Prostate gland (tissue), 2 donors: ENCODE measurements at regions of chr20 and their contacts with region 1.

Region 1: DNA sequence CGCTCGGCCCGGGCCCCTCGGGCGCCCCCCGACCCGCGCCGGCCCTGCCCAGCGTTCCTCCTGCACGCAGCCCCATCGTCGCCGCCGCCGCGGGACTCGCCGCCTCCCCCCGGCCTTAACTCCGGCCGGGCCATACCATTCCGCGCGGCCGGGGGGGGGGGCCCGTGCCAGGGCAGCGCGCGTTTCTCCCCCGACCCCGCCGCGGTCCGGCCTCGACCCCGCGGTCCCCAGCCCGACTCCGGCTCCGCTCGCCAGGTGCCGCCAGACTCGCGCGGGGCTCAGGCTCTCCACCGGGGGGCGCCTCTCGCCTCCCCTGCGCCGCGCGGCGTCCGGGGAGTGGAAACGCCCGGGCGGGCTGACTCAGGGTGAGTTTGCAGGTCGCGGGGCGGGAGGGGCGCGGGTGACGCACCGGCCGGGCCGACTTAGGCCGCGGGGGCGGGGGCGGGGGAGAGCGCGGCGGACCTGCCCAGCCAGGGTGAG is at the start of gene SRXN1:
- DNase-seq: peak; percentile 85
- H3K4me3 ChIP-seq: peak within 1 kb of the TSS; percentile 56 to 74
- H3K27ac ChIP-seq: peak within 1 kb of the TSS; percentile 76 to 80
- H3K4me1 ChIP-seq: peaks cover 5% of the 10 kb centered on the region
- H3K27me3 ChIP-seq: no peaks in the 10 kb centered on the region
- CTCF ChIP-seq: peak; percentile 26 to 82 (median 61)
- POLR2A ChIP-seq: peak; percentile 11
- total RNA-seq, gene SRXN1: 33.6 to 41.4 TPM

Region 2: DNA sequence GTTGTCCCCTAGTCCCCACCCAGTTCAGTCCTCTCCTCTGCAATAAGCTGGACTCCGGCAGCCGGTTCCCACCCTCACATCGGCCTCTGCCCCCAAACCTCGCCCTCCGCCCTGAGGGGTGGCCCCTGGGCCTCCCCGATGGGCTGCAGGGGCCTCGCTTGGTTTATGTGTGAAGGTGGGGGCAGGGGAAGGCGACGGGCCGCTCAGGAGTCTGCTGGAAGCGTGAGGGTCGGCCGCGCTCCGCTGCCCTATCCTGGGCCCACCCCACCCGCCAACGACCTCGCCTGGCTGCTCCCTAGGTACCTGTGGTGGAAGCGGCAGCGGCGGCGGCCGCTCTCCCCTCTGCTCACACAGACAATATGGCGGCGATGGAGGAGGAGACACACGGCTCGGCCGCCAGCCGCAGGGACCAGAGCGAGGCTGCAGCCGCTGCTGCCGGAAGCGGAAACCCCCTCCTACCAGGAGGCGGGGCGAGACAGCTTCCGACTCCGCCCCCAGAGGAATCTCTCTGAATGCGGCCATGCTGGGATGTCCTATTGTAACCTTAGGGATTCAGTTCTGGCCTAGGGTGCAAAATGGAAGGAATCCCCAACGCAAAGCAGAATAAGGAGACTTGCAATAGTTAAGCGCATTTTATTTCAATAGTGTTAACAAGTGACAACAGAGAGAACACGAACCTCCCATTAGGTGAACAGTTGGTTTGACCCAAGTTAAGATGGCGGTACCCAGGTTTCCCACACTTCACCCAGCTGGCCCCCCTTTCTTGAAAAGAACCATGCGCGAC is 109.6 kb before region 1 on chr20 and contains the start of gene CSNK2A1:
- intact Hi-C with region 1: loop called (anchors 10 kb)
- DNase-seq: peak; percentile 92
- H3K4me3 ChIP-seq: peak within 1 kb of the TSS; percentile 91 to 97
- H3K27ac ChIP-seq: peak within 1 kb of the TSS; percentile 92 to 93
- H3K4me1 ChIP-seq: peaks cover 6% of the 10 kb centered on the region
- H3K27me3 ChIP-seq: no peaks in the 10 kb centered on the region
- CTCF ChIP-seq: peak in 2 of 4 experiments; percentile 9 to 16
- POLR2A ChIP-seq: peak; percentile 94
- total RNA-seq, gene CSNK2A1: 66.9 to 152 TPM

Region 3: DNA sequence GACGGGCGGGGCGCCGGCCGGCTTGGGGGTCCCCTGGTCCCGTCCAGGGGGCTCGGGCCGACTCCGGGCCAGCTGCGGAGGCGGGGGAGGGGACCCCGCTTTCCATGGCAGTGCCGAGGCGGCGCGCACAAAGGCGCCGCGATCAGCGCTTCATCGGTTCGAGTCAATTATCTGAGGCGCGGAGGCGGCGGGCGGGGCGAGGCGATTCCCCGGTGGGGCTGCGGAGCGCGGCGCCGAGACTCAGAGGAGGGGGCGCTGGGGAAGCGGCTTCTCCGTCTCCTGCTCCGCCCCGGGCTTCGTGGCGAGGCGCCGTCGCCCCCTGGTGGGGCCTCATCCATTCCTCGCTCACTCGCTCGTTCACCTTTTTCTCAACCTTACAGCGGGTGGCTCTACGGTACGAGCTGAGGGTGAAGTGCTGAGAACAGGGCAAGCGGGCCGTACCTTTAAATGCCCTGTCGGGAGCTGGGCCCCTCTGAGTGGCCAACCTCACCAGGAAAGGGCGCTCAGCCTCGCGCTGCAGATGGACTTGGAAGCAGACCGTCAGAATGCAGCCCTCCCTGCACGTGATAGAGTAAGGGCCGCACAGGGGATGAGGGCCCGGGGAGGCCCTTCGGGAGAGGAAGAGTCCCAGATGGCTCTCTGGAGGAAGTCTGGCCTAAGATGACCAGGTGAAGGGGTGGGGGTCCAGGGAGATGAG is 75.2 kb after region 1 on chr20:
- intact Hi-C with region 1: loop called (anchors 5 kb)
- DNase-seq: peak; percentile 52
- H3K4me3 ChIP-seq: peak overlapping the region; percentile 30 to 40
- H3K27ac ChIP-seq: no peak overlapping the region
- H3K4me1 ChIP-seq: no peaks in the 10 kb centered on the region
- H3K27me3 ChIP-seq: no peaks in the 10 kb centered on the region
- CTCF ChIP-seq: peak in 3 of 4 experiments; percentile 55 to 68 (median 66)
- POLR2A ChIP-seq: no peak

Region 4: DNA sequence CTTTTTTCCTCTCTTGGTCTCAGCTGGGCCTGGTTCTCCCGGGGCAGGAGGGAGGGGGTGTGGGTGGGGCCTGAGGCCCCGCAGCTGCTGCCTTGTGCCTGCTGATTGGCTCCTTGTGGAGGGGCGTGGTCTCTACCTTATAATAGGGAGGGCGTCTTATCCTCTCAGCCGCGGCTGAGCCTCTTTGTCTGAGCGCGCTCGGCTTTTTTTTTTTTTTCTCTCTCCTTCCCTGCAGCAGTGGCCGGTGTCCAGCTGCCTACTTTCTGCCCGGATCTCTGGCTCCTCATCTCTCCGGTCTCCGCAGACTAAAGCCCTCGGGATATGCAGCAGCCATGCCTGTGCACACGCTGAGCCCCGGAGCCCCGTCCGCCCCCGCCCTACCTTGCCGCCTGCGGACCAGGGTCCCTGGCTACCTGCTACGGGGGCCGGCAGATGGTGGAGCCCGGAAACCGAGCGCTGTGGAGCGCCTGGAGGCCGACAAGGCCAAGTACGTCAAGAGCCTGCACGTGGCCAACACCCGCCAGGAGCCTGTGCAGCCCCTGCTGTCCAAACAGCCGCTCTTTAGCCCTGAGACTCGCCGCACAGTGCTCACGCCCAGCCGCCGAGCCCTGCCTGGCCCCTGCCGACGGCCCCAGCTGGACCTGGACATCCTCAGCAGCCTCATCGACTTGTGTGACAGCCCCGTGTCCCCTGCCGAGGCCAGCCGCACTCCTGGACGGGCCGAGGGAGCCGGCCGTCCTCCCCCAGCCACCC is 191.5 kb after region 1 on chr20:
- intact Hi-C with region 1: loop called (anchors 10 kb)
- DNase-seq: peak; percentile 96
- H3K4me3 ChIP-seq: peak overlapping the region; percentile 15 to 26
- H3K27ac ChIP-seq: peak overlapping the region; percentile 87 to 92
- H3K4me1 ChIP-seq: peaks cover 17% of the 10 kb centered on the region
- H3K27me3 ChIP-seq: no peaks in the 10 kb centered on the region
- CTCF ChIP-seq: no peak
- POLR2A ChIP-seq: no peak